CD14-positive monocyte (primary cell): ENCODE measurements at regions of chr6 and their contacts with region 1.

Region 1: GRCh38 chr6:17987576-17988421 is at the start of gene KIF13A:
- DNase-seq: peak; percentile 43 to 62 (median 60)
- H3K4me3 ChIP-seq: peak within 1 kb of the TSS; percentile 69 to 99 (median 92)
- H3K4me3 Mint-ChIP-seq: peak within 1 kb of the TSS; percentile 94 to 99
- H3K27ac ChIP-seq: peak within 1 kb of the TSS; percentile 91 to 95
- H3K27ac Mint-ChIP-seq: peak within 1 kb of the TSS; percentile 90 to 99 (median 97)
- H3K4me1 ChIP-seq: peaks cover 52 to 55% of the 10 kb centered on the region in 2 donors
- H3K4me1 Mint-ChIP-seq: peaks cover 51% of the 10 kb centered on the region
- H3K27me3 ChIP-seq: no peaks in the 10 kb centered on the region
- H3K27me3 Mint-ChIP-seq: peaks cover 0 to 4% (median 4%) of the 10 kb centered on the region in 3 donors
- CTCF ChIP-seq: peak; percentile 29
- polyA plus RNA-seq, gene KIF13A: 2.9 to 28.4 (median 6.0) TPM

Region 2: DNA sequence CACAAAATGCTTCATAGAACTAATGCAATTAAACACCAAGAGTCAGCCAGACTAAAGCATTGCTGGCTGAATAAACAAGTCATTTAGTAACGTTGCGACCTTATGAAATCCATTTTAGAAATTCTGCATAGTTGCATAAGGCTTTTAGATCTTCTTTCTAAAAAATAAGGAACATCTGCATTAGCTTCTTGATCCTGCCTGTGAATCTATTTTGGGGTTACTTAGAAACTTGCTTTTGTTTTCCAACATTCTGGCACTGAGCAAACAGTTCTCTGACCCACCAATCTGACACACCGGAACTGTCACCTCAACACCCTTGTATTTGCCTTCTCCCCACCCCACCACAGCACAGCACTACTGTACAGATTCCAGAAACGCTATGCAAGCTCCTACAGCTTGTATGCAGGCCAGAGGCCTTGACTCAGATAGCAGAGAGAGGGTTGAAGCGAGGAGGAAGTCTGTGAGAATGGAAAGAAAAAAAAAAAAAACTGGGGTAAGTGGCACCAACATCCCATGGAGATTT is 55.4 kb before region 1 on chr6:
- intact Hi-C with region 1: loop called (anchors 10 kb)
- DNase-seq: peak; percentile 75 to 87 (median 80)
- H3K4me3 ChIP-seq: peak overlapping the region in 1 of 3 experiments; percentile 52
- H3K4me3 Mint-ChIP-seq: peak overlapping the region; percentile 69 to 88
- H3K27ac ChIP-seq: peak overlapping the region; percentile 87 to 90
- H3K27ac Mint-ChIP-seq: peak overlapping the region; percentile 90 to 98 (median 97)
- H3K4me1 ChIP-seq: peaks cover 65 to 70% of the 10 kb centered on the region in 2 donors
- H3K4me1 Mint-ChIP-seq: peaks cover 75% of the 10 kb centered on the region
- H3K27me3 ChIP-seq: no peaks in the 10 kb centered on the region
- H3K27me3 Mint-ChIP-seq: peaks cover 0 to 2% (median 0%) of the 10 kb centered on the region in 3 donors
- CTCF ChIP-seq: no peak